ENCODE measurements at regions of chr12 and their contacts with region 1.

Region 1: GRCh38 chr12:54214553-54215406 is 26.0 kb upstream of the SMUG1 start:
- DNase-seq: peak; percentile 85
- ATAC-seq: peak; percentile 92
- H3K4me3 ChIP-seq: peak overlapping the region in 2 of 3 experiments; percentile 30 to 61; a peak in 1 of 6 replicates
- H3K27ac ChIP-seq: no peak overlapping the region
- H3K4me1 ChIP-seq: peaks cover 28% of the 10 kb centered on the region
- H3K27me3 ChIP-seq: peaks cover 0 to 28% of the 10 kb centered on the region in 2 experiments; a peak in 4 of 5 replicates
- CTCF ChIP-seq: peak; percentile 95
- EP300 ChIP-seq: no peak
- POLR2A ChIP-seq: no peak
- RAD21 ChIP-seq: peak; percentile 85

Region 2: GRCh38 chr12:53757095-53757770 is 457.5 kb before region 1 on chr12:
- CTCF ChIA-PET with region 1: no interaction called
- POLR2A ChIA-PET with region 1: no interaction called
- in situ Hi-C with region 1: loop called (anchors 10 kb)
- intact Hi-C with region 1: no loop called
- DNase-seq: peak; percentile 44
- ATAC-seq: peak; percentile 77
- H3K4me3 ChIP-seq: no peak overlapping the region
- H3K27ac ChIP-seq: no peak overlapping the region
- H3K4me1 ChIP-seq: peaks cover 9% of the 10 kb centered on the region; the same call in 1 of the 2 replicates
- H3K27me3 ChIP-seq: peaks cover 2 to 86% of the 10 kb centered on the region in 2 experiments; a peak in 4 of 5 replicates
- CTCF ChIP-seq: peak; percentile 79
- EP300 ChIP-seq: no peak
- POLR2A ChIP-seq: no peak
- RAD21 ChIP-seq: peak; percentile 37; the same call in 1 of the 2 replicates

Region 3: GRCh38 chr12:53984901-53985709 is 229.7 kb before region 1 on chr12 and contains the start of gene HOXC10:
- CTCF ChIA-PET with region 1: interaction called, 12 read pairs
- POLR2A ChIA-PET with region 1: no interaction called
- in situ Hi-C with region 1: no loop called
- intact Hi-C with region 1: no loop called
- DNase-seq: peak; percentile 53
- ATAC-seq: peak; percentile 48
- H3K4me3 ChIP-seq: no peak within 1 kb of the TSS
- H3K27ac ChIP-seq: no peak within 1 kb of the TSS
- H3K4me1 ChIP-seq: peaks cover 35% of the 10 kb centered on the region
- H3K27me3 ChIP-seq: peaks cover 6 to 42% of the 10 kb centered on the region in 2 experiments; a peak in 4 of 5 replicates
- CTCF ChIP-seq: peak; percentile 80
- EP300 ChIP-seq: no peak
- POLR2A ChIP-seq: no peak
- RAD21 ChIP-seq: peak; percentile 76
- total RNA-seq, gene HOXC10: not detected in 2 replicates

Region 4: GRCh38 chr12:54352022-54352531 is 137.3 kb after region 1 on chr12:
- CTCF ChIA-PET with region 1: no interaction called
- POLR2A ChIA-PET with region 1: no interaction called
- in situ Hi-C with region 1: no loop called
- intact Hi-C with region 1: no loop called
- DNase-seq: no peak
- ATAC-seq: no peak
- H3K4me3 ChIP-seq: no peak overlapping the region
- H3K27ac ChIP-seq: no peak overlapping the region
- H3K4me1 ChIP-seq: peaks cover 26% of the 10 kb centered on the region
- H3K27me3 ChIP-seq: no peaks in the 10 kb centered on the region
- CTCF ChIP-seq: no peak
- EP300 ChIP-seq: no peak
- POLR2A ChIP-seq: no peak
- RAD21 ChIP-seq: no peak

Region 5: DNA sequence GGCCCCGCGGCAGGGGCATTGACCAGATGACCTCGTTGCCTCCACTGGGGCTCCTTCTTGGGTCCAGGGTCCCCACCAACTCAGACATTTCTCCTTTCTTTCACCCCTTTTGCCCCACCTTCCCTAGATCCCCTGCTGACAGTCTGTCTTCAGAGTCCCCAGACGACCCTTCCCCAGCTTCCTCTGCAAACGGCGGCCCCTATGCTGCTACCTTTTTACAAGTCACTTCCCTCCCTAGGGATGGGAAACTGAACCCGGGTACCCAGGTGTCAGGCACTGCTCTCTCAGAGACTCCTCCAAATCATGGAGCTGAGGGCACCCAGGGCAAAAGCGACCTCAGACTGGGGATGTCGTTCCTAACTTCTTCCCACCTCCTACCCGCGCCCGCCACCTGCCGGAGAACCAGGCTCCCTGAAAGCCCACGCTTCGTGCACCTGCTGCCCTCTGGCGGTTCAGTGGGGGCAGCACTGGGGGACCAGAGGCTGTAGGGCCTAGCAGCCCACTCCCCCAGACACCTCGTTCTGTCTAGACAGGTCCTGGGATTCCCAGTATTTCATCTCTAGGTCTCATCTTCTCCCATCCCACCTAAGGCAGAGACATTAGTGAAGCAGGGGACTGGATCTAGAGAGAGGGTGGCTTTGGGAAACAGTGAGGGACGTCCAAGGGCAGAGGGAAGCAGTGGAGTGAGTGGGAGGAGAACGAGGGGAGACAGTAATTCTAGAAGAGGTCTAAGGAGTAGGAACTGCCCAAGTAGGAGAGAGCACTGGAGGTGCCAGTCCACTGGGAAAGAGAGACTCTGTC is 164.8 kb after region 1 on chr12:
- CTCF ChIA-PET with region 1: interaction called, 18 read pairs
- POLR2A ChIA-PET with region 1: no interaction called
- in situ Hi-C with region 1: no loop called
- intact Hi-C with region 1: no loop called
- DNase-seq: peak; percentile 79
- ATAC-seq: peak; percentile 92
- H3K4me3 ChIP-seq: peak overlapping the region; percentile 38 to 71 (median 55)
- H3K27ac ChIP-seq: no peak overlapping the region
- H3K4me1 ChIP-seq: peaks cover 23% of the 10 kb centered on the region
- H3K27me3 ChIP-seq: peaks cover 0 to 21% of the 10 kb centered on the region in 2 experiments; a peak in 2 of 5 replicates
- CTCF ChIP-seq: peak; percentile 100
- EP300 ChIP-seq: no peak
- POLR2A ChIP-seq: no peak
- RAD21 ChIP-seq: peak; percentile 89